Dorsolateral prefrontal cortex (tissue), 120 donors: ENCODE measurements at regions of chr1 and their contacts with region 1.

Region 1: DNA sequence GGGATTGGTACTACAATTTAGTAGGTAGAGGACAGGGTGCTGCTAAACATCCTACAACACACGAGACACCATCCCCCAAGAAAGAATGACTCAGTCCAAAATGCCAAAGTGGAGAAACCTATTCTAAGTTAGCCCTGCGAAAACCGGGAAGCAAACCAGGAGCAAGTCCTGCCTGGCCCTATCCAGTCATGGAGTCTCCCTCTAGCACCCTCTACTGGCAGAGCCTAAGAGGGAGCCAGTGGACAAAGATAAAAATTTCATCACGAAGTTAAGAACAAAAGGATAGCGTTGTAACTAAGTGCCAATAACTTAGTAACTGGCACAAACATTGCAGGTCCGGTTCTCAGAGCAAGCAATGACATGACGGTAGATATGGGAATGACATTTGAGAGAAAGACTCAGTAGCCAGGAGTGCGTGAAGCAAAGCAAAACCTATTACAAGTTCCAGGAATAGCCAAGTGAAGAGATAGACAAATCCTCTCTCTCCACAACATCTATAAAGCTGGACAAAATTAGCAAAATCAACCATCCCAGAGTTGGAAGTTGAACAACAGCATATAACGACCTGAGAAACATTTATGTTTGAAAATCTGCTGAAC is 383.5 kb downstream of the OMA1 start:
- DNase-seq: peak in 8 of 10 donors; percentile 36 to 63 (median 46)
- H3K4me3 ChIP-seq: no peak overlapping the region
- H3K27ac ChIP-seq: no peak overlapping the region
- H3K27me3 ChIP-seq: peaks cover 0 to under 1% (median 0%) of the 10 kb centered on the region in 45 donors
- CTCF ChIP-seq: peak; percentile 54 to 88 (median 77)

Region 2: DNA sequence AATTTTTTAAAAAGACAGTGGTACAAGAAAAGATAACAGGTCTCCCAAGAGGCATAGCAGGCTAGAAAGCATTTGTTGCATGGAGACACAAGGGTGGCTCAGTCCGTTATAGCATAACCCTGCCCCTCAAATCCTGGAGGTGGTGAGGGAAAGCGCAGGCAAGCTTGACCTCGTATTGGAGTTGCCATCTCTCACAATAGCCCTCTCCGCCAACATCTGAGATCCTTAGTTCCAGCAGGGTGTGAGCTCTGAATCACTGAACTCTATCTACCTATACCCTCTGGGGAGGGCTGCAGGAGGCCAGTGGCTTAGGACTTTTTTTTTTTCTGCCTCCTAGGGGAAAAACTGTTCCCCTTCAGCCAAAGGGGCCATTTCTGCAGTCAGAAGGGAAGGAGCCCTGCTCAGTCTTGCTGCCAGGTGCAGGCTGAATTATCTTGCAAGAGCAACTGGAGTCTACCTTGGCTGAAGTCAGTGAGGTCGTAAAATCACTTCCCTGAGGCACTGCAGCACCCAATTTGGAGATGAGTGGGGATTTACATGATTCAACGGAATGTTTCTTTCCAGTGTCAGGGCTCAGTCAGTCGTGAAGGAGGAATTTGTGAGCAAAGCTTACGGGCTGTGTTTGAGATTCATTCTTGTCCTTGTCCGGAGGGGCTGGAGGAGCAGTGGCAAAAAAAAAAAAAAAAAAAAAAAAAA is 1325.7 kb before region 1 on chr1:
- intact Hi-C with region 1: loop called (anchors 5 to 10 kb)
- DNase-seq: no peak
- H3K4me3 ChIP-seq: no peak overlapping the region
- H3K27ac ChIP-seq: no peak overlapping the region
- H3K27me3 ChIP-seq: peaks cover 0 to 6% (median 0%) of the 10 kb centered on the region in 45 donors
- CTCF ChIP-seq: no peak